ENCODE measurements at regions of chr1 and their contacts with region 1.

Region 1: GRCh38 chr1:34412598-34413370 is 236.1 kb downstream of the C1orf94 start:
- DNase-seq: no peak
- H3K4me3 ChIP-seq: no peak overlapping the region
- H3K27ac ChIP-seq: no peak overlapping the region
- H3K4me1 ChIP-seq: no peaks in the 10 kb centered on the region
- H3K27me3 ChIP-seq: no peaks in the 10 kb centered on the region
- CTCF ChIP-seq: no peak
- EP300 ChIP-seq: no peak
- POLR2A ChIP-seq: no peak
- RAD21 ChIP-seq: no peak

Region 2: DNA sequence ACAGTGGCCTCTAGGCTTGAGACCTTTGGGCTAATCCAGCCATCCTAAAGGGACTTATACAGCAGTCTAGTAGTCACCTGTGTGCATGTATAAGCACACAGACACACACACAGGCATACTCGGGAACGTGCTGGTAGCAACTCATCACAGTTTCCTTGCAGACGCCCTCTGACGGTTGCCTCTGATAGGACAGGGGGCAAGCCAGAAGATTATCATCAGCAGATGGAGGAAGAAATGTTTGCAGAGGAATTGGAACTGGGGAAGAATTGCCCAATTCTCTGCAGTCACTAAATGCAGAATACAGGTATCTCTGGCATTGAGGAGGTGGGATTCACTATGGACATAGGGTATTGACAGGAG is 13.9 kb before region 1 on chr1:
- CTCF ChIA-PET with region 1: interaction called, 11 read pairs
- POLR2A ChIA-PET with region 1: no interaction called
- DNase-seq: peak in 1 of 2 experiments; percentile 61
- H3K4me3 ChIP-seq: no peak overlapping the region
- H3K27ac ChIP-seq: no peak overlapping the region
- H3K4me1 ChIP-seq: peaks cover 0 to 7% (median 0%) of the 10 kb centered on the region in 4 experiments; a peak in 2 of 7 replicates
- H3K27me3 ChIP-seq: no peaks in the 10 kb centered on the region
- CTCF ChIP-seq: peak; percentile 66 to 76 (median 72)
- EP300 ChIP-seq: no peak
- POLR2A ChIP-seq: no peak
- RAD21 ChIP-seq: peak; percentile 61 to 72

Region 3: GRCh38 chr1:34529935-34530859 is 117.4 kb after region 1 on chr1:
- CTCF ChIA-PET with region 1: no interaction called
- POLR2A ChIA-PET with region 1: no interaction called
- DNase-seq: no peak
- H3K4me3 ChIP-seq: no peak overlapping the region
- H3K27ac ChIP-seq: no peak overlapping the region
- H3K4me1 ChIP-seq: no peaks in the 10 kb centered on the region; a peak in 1 of 7 replicates
- H3K27me3 ChIP-seq: no peaks in the 10 kb centered on the region
- CTCF ChIP-seq: no peak
- EP300 ChIP-seq: no peak
- POLR2A ChIP-seq: no peak
- RAD21 ChIP-seq: no peak

Measured in H1 (cell line).